Activated naive CD4-positive, alpha-beta T cell treated with anti-CD3 and anti-CD28 coated beads, Interleukin-2, amount 10 ng/mL, durations not matched to agents 7 days and 5 days (primary cell): ENCODE measurements at regions of chr1 and their contacts with region 1.

Region 1: GRCh38 chr1:167533851-167534300 is 15.5 kb upstream of the CD247 start:
- DNase-seq: peak; percentile 73
- H3K4me3 Mint-ChIP-seq: no peak overlapping the region
- H3K27ac Mint-ChIP-seq: no peak overlapping the region
- H3K4me1 Mint-ChIP-seq: peaks cover 6% of the 10 kb centered on the region
- H3K27me3 Mint-ChIP-seq: peaks cover 29% of the 10 kb centered on the region

Region 2: DNA sequence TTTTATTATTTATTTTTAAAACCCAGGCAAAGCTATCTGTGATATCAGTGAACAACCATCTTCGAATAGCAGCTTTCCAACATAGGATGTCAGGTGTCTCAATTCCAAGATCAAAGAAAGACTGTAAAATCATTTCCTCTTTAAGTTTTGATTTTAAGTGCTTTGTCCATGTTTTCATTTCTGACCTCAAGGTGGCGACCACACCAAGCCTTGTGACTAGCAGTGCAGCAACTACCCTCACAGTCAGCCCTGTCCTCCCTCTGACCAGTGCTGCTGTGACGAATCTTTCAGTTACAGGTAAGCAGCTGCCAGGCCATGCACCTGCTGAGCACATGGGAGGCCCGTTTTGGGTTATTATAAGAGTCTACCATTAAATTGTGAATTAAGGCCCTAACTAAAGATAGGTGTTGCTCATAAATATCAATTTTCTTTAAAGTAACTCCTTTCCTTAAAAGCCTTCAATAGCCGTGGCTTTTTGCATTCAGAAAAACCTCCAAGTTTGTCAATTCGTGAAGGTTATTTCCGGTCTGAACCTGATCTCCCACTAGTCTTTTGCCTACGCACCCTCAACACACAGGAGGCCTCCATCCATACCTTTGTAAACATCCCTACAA is 132.5 kb before region 1 on chr1:
- CTCF ChIA-PET with region 1: interaction called, 48 read pairs
- DNase-seq: peak; percentile 65
- H3K4me3 Mint-ChIP-seq: no peak overlapping the region
- H3K27ac Mint-ChIP-seq: no peak overlapping the region
- H3K4me1 Mint-ChIP-seq: peaks cover 4% of the 10 kb centered on the region
- H3K27me3 Mint-ChIP-seq: no peaks in the 10 kb centered on the region

Region 3: GRCh38 chr1:167447521-167448136 is 86.2 kb before region 1 on chr1:
- CTCF ChIA-PET with region 1: interaction called, 53 read pairs
- DNase-seq: peak; percentile 86
- H3K4me3 Mint-ChIP-seq: peak overlapping the region; percentile 31
- H3K27ac Mint-ChIP-seq: peak overlapping the region; percentile 99
- H3K4me1 Mint-ChIP-seq: peaks cover 91% of the 10 kb centered on the region
- H3K27me3 Mint-ChIP-seq: no peaks in the 10 kb centered on the region

Region 4: GRCh38 chr1:167499664-167500101 is 34.2 kb before region 1 on chr1:
- CTCF ChIA-PET with region 1: interaction called, 25 read pairs
- DNase-seq: peak; percentile 57
- H3K4me3 Mint-ChIP-seq: peak overlapping the region; percentile 31
- H3K27ac Mint-ChIP-seq: peak overlapping the region; percentile 88
- H3K4me1 Mint-ChIP-seq: peaks cover 99% of the 10 kb centered on the region
- H3K27me3 Mint-ChIP-seq: no peaks in the 10 kb centered on the region

Region 5: DNA sequence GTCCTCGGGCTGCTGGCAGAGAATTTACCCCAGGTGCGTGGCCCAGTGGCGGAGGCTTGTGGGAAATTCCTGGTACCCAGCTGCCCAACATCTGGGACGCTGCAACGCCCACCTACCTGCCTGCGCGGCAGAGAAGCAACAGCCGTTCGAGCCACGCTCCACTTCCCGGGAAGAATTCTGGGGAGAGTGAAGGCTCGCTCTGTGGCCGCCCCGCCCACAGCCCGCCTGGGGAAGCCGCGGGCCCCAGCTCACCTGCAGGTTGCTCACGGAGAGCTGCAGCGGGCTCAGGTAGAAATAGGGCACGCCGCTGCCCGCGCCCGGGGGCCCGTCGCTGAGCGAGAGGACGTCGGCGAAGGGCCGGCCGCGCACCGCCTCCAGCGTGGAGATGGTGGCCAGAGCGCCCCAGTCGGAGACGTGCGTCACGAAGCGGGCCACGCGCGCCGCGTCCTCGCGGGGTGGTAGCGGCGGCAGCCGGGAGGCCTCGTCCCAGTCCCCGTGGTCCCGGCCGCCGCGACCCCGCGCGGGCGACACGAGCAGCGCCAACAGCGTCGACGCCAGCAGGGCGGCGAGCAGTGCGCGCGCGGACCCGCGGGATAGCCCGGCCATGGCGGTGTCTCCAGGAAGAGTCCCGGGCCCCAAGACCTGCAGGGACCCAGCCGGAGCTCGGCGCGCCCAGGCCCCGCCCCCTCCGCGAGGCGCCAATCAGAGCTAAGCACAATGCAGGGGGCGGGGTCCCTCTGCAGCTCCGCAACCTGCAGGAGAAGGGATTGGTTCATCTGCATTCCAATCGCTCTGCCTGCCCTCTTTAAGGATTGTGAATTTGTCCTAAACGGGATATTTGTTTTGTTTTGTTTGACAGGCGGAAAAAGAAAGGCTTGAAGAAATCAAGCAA is 19.5 kb after region 1 on chr1 and contains the start of gene CREG1:
- CTCF ChIA-PET with region 1: interaction called, 12 read pairs
- DNase-seq: peak; percentile 96
- H3K4me3 Mint-ChIP-seq: peak within 1 kb of the TSS; percentile 84
- H3K27ac Mint-ChIP-seq: peak within 1 kb of the TSS; percentile 83
- H3K4me1 Mint-ChIP-seq: peaks cover 26% of the 10 kb centered on the region
- H3K27me3 Mint-ChIP-seq: peaks cover 14% of the 10 kb centered on the region